ENCODE measurements at regions of chr2 and their contacts with region 1.

Region 1: DNA sequence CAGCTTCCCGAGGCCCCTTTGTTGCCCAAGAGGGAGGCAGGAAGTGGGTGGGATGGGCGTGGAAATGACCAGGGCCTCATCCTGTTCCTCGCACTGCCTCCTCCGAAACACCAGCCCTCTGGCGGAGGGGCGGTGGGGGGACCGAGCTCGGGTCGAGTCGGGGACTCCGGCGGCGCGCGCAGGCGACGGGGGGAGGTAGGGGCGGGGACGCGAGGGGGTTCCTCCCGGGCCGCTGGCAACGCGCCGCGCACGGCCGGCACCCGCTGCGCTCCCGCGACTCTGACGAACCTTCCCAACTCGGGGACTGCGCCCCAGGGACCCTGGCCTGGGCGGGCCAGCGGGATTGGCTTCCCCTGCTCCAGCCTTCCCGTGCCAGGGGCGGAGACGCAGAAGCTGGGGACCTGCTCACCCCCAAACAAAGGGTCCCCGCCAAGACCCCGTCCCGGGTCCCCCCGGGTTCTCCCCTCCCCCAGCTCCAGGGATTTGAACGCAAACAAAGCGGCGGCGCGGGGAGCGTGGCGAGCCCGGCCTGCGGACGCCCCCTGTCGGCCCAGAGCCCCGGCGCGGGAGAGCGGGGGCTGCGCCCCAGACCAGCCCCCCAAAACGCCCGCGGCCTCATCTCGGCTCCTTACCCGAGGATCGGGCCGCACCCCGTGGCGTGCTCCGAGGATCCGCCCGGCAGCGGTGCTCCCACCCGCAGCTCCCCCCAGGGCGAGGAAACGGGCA is 1.2 kb downstream of the SEMA4C start:
- DNase-seq: peak; percentile 90 to 94
- H3K4me3 ChIP-seq: peak overlapping the region; percentile 94
- H3K4me1 ChIP-seq: peaks cover 10% of the 10 kb centered on the region
- H3K27me3 ChIP-seq: no peaks in the 10 kb centered on the region

Region 2: DNA sequence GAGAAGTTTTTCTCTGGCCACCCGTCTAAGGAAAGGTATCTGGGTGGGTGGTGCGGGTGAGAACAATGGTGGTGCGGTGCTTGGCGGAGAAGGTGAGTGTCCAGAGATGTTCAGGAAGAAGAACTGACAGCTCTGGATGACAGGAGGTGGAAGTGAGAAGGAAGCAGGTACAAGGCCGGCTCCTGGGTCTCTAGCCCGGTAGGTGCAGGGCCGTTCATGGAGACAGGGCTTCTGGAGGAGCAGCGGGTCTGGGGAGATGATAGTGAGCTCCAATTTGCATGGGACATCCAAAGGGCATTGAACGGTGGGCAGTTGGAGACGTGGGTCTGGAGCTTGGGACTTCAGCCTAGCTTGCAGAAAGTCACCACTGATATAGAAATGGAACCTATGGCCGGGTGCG is 226.9 kb after region 1 on chr2:
- in situ Hi-C with region 1: loop called (anchors 25 kb)
- DNase-seq: no peak
- H3K4me3 ChIP-seq: no peak overlapping the region
- H3K4me1 ChIP-seq: no peaks in the 10 kb centered on the region; the same call in 1 of the 2 replicates
- H3K27me3 ChIP-seq: no peaks in the 10 kb centered on the region

Region 3: GRCh38 chr2:97673182-97673914 is 804.6 kb after region 1 on chr2:
- in situ Hi-C with region 1: no loop called
- DNase-seq: no peak
- H3K4me3 ChIP-seq: no peak overlapping the region
- H3K4me1 ChIP-seq: no peaks in the 10 kb centered on the region
- H3K27me3 ChIP-seq: no peaks in the 10 kb centered on the region

Measured in HAP-1 (cell line).